H1 (cell line): ENCODE measurements at regions of chr1 and their contacts with region 1.

Region 1: GRCh38 chr1:209354111-209354839 is 229.2 kb upstream of the CAMK1G start:
- DNase-seq: peak; percentile 71 to 78
- H3K4me3 ChIP-seq: no peak overlapping the region
- H3K27ac ChIP-seq: no peak overlapping the region
- H3K4me1 ChIP-seq: peaks cover 0 to 10% (median 1%) of the 10 kb centered on the region in 4 experiments; a peak in 4 of 7 replicates
- H3K27me3 ChIP-seq: no peaks in the 10 kb centered on the region
- CTCF ChIP-seq: peak; percentile 77 to 91 (median 81)
- EP300 ChIP-seq: no peak
- POLR2A ChIP-seq: no peak
- RAD21 ChIP-seq: peak; percentile 89 to 93

Region 2: DNA sequence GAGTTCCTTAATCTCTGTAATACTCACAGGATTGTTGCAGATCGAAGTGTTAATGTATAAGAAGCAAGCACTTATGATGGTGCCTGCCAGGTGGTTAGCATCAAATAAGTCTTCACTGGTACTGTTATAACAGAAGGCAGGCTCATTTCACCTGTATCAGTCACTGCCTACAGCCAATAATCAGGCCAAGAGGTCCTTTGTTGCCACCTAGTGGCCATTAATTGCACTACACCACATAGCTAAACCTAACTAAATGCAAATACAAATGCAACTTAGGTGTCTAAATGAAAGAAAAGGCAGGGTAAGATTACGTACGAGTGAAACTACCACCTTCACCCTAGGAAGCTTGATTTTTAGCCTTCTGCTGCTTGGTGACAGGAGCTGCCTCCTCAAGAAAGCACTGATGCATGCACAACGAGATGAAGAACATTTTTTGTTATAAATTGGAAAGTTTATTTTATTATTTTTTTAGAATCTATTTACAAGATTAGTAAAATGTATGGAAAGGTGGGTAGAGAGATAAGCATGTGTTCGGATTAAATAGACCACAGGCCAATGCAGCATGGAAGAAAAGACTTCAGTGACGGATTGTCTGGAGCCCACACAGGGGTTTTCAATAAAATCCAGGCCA is 105.5 kb before region 1 on chr1:
- CTCF ChIA-PET with region 1: interaction called, 40 read pairs
- POLR2A ChIA-PET with region 1: no interaction called
- DNase-seq: peak in 1 of 2 experiments; percentile 83
- H3K4me3 ChIP-seq: no peak overlapping the region
- H3K27ac ChIP-seq: no peak overlapping the region
- H3K4me1 ChIP-seq: peaks cover 0 to 16% (median 5%) of the 10 kb centered on the region in 4 experiments; a peak in 4 of 7 replicates
- H3K27me3 ChIP-seq: no peaks in the 10 kb centered on the region
- CTCF ChIP-seq: peak in 2 of 3 experiments; percentile 83 to 90; a peak in 3 of 4 replicates
- EP300 ChIP-seq: no peak
- POLR2A ChIP-seq: no peak
- RAD21 ChIP-seq: peak; percentile 86 to 91

Region 3: GRCh38 chr1:209276321-209276720 is 78.0 kb before region 1 on chr1:
- CTCF ChIA-PET with region 1: no interaction called
- POLR2A ChIA-PET with region 1: no interaction called
- DNase-seq: no peak
- H3K4me3 ChIP-seq: no peak overlapping the region
- H3K27ac ChIP-seq: no peak overlapping the region
- H3K4me1 ChIP-seq: no peaks in the 10 kb centered on the region
- H3K27me3 ChIP-seq: no peaks in the 10 kb centered on the region
- CTCF ChIP-seq: no peak
- EP300 ChIP-seq: no peak
- POLR2A ChIP-seq: no peak
- RAD21 ChIP-seq: no peak

Region 4: DNA sequence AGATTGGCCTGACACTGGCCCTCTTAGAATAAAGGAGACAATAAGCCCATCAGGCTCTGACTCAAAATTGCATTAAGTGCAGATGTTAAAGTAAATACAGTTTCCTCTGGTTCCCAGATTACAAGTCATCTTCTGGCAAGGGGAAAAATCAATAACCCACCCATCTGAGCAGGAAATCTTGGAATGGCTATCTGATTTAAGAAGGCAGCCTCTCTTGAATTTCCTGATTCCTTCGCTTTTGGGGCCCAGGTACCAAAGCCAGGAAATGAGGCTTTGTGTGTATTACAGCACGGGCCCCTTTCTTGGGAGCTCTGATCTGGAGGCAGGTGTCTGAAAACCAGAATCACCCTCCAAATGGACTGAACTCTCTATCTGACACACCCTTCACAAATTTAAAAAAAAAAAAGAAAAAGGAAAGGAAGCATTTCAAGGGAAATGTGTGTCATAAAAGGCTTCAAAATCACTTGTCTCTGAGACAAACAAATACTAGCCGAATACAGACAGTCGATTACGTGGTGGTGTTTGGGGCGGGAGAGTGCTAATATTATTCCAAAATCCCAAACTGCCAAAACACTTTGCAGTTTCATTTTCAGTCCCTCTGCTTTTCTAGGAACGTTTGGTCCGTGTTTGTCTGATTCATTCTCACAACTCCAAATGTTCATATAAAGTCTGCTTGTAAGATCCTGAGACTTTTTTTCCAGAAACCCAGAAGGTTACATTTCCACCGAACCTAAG is 11.7 kb before region 1 on chr1:
- CTCF ChIA-PET with region 1: interaction called, 79 read pairs
- POLR2A ChIA-PET with region 1: interaction called, 3 read pairs
- DNase-seq: no peak
- H3K4me3 ChIP-seq: no peak overlapping the region
- H3K27ac ChIP-seq: no peak overlapping the region
- H3K4me1 ChIP-seq: no peaks in the 10 kb centered on the region; a peak in 1 of 7 replicates
- H3K27me3 ChIP-seq: no peaks in the 10 kb centered on the region
- CTCF ChIP-seq: no peak
- EP300 ChIP-seq: no peak
- POLR2A ChIP-seq: no peak
- RAD21 ChIP-seq: no peak

Region 5: GRCh38 chr1:209383907-209384709 is 29.8 kb after region 1 on chr1:
- CTCF ChIA-PET with region 1: interaction called, 10 read pairs
- POLR2A ChIA-PET with region 1: no interaction called
- DNase-seq: no peak
- H3K4me3 ChIP-seq: no peak overlapping the region
- H3K27ac ChIP-seq: peak overlapping the region; percentile 26
- H3K4me1 ChIP-seq: peaks cover 3 to 18% (median 13%) of the 10 kb centered on the region in 4 experiments; a peak in 4 of 7 replicates
- H3K27me3 ChIP-seq: no peaks in the 10 kb centered on the region
- CTCF ChIP-seq: no peak
- EP300 ChIP-seq: no peak
- POLR2A ChIP-seq: no peak
- RAD21 ChIP-seq: no peak

Region 6: GRCh38 chr1:209435654-209436566 is 81.6 kb after region 1 on chr1:
- CTCF ChIA-PET with region 1: interaction called, 53 read pairs
- POLR2A ChIA-PET with region 1: interaction called, 5 read pairs
- DNase-seq: peak; percentile 75 to 97
- H3K4me3 ChIP-seq: no peak overlapping the region
- H3K27ac ChIP-seq: no peak overlapping the region
- H3K4me1 ChIP-seq: peaks cover 8 to 29% (median 25%) of the 10 kb centered on the region in 4 experiments
- H3K27me3 ChIP-seq: no peaks in the 10 kb centered on the region
- CTCF ChIP-seq: peak; percentile 92 to 93 (median 93)
- EP300 ChIP-seq: 0 out of 3 replicates have a peak, but pooled peaks of 1 of the 2 experiments have one; percentile 14
- POLR2A ChIP-seq: no peak
- RAD21 ChIP-seq: peak; percentile 99